ENCODE measurements at regions of chrX and their contacts with region 1.

Region 1: GRCh38 chrX:31266172-31267076 is 194.6 kb upstream of the FTHL17 start:
- DNase-seq: peak; percentile 50 to 78 (median 63)
- ATAC-seq: peak; percentile 79 to 93 (median 91)
- H3K4me3 ChIP-seq: peak overlapping the region; percentile 39 to 90 (median 69)
- H3K27ac ChIP-seq: peak overlapping the region in 11 of 12 donors; percentile 34 to 81 (median 70)
- H3K4me1 ChIP-seq: peaks cover 0 to 7% (median 0%) of the 10 kb centered on the region in 12 donors
- H3K27me3 ChIP-seq: peaks cover 0 to 9% (median 0%) of the 10 kb centered on the region in 9 donors
- CTCF ChIP-seq: no peak
- POLR2A ChIP-seq: peak in 1 of 2 donors; percentile 44

Region 2: GRCh38 chrX:31245714-31246113 is 20.7 kb before region 1 on chrX:
- intact Hi-C with region 1: no loop called
- DNase-seq: no peak
- ATAC-seq: no peak
- H3K4me3 ChIP-seq: no peak overlapping the region
- H3K27ac ChIP-seq: no peak overlapping the region
- H3K4me1 ChIP-seq: no peaks in the 10 kb centered on the region
- H3K27me3 ChIP-seq: no peaks in the 10 kb centered on the region
- CTCF ChIP-seq: no peak
- POLR2A ChIP-seq: no peak

Region 3: GRCh38 chrX:31423609-31424189 is 157.3 kb after region 1 on chrX:
- intact Hi-C with region 1: loop called in 3 of 10 experiments (anchors 10 kb)
- DNase-seq: peak in 3 of 5 donors; percentile 29 to 44 (median 31)
- ATAC-seq: peak in 1 of 4 donors; percentile 34
- H3K4me3 ChIP-seq: peak overlapping the region in 5 of 12 donors; percentile 1 to 28 (median 26)
- H3K27ac ChIP-seq: peak overlapping the region in 4 of 12 donors; percentile 11 to 28 (median 18)
- H3K4me1 ChIP-seq: peaks cover 0 to 11% (median 0%) of the 10 kb centered on the region in 12 donors
- H3K27me3 ChIP-seq: no peaks in the 10 kb centered on the region
- CTCF ChIP-seq: peak in 9 of 12 donors; percentile 10 to 48 (median 29)
- POLR2A ChIP-seq: no peak